Activated CD8-positive, alpha-beta memory T cell treated with anti-CD3 and anti-CD28 coated beads, Interleukin-2, amount 10 ng/mL, durations not matched to agents 7 days and 5 days (primary cell): ENCODE measurements at regions of chr12 and their contacts with region 1.

Region 1: GRCh38 chr12:111812881-111813741 is 28.9 kb upstream of the MAPKAPK5 start:
- DNase-seq: peak; percentile 79
- ATAC-seq: peak; percentile 95
- H3K4me3 Mint-ChIP-seq: no peak overlapping the region
- H3K27ac Mint-ChIP-seq: no peak overlapping the region
- H3K4me1 Mint-ChIP-seq: peaks cover 8% of the 10 kb centered on the region
- H3K27me3 Mint-ChIP-seq: peaks cover 3% of the 10 kb centered on the region

Region 2: GRCh38 chr12:111685744-111686517 is 127.2 kb before region 1 on chr12 and contains the starts of genes ACAD10 and BRAP:
- CTCF ChIA-PET with region 1: interaction called, 15 read pairs
- DNase-seq: peak; percentile 96
- ATAC-seq: peak; percentile 97
- H3K4me3 Mint-ChIP-seq: peak within 1 kb of the TSS; percentile 96
- H3K27ac Mint-ChIP-seq: peak within 1 kb of the TSS; percentile 91
- H3K4me1 Mint-ChIP-seq: peaks cover 35% of the 10 kb centered on the region
- H3K27me3 Mint-ChIP-seq: no peaks in the 10 kb centered on the region
- total RNA-seq, gene ACAD10: 24.7 to 30.3 TPM
- total RNA-seq, gene BRAP: 20.3 to 22.3 TPM

Region 3: DNA sequence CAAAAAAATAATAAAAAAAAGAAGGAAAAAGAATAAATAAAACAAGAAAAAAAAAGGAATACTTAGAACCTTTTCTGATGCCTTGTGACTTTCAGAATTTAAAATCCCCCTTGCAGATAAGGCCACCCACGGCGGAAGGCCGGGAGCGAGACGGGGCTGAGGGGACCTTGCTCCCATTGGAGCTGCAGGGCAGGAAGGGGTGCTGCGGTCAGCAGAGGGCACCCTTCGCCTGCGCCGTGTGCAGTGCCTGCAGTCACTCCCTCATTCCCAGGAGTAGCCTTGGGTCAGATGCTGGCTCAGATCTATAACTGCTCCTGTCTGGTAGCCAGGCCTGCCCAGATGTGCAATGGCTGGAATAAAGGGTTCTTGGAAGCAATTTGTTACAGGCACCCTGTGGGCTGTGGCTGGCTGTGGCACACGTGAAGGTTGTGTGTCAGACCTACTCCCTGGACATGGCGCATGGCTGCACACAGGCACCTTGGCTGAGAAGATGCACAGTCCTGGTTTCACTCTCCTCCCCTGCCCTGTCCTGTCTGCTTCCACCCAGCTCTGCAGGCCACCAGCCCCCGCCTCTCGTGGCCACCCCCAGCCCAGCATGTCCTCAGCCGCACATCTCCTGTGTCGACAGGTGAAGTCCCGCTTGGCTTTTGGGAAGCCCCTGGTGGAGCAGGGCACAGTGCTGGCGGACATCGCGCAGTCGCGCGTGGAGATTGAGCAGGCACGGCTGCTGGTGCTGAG is 59.8 kb before region 1 on chr12:
- CTCF ChIA-PET with region 1: interaction called, 24 read pairs
- DNase-seq: no peak
- ATAC-seq: no peak
- H3K4me3 Mint-ChIP-seq: no peak overlapping the region
- H3K27ac Mint-ChIP-seq: peak overlapping the region; percentile 7
- H3K4me1 Mint-ChIP-seq: peaks cover 16% of the 10 kb centered on the region
- H3K27me3 Mint-ChIP-seq: no peaks in the 10 kb centered on the region

Region 4: GRCh38 chr12:111841750-111842555 is 28.8 kb after region 1 on chr12 and contains the start of gene MAPKAPK5:
- CTCF ChIA-PET with region 1: interaction called, 12 read pairs
- DNase-seq: peak; percentile 97
- ATAC-seq: peak; percentile 91
- H3K4me3 Mint-ChIP-seq: peak within 1 kb of the TSS; percentile 97
- H3K27ac Mint-ChIP-seq: peak within 1 kb of the TSS; percentile 95
- H3K4me1 Mint-ChIP-seq: peaks cover 53% of the 10 kb centered on the region
- H3K27me3 Mint-ChIP-seq: no peaks in the 10 kb centered on the region
- total RNA-seq, gene MAPKAPK5: 48.1 to 49.6 TPM